B cell (primary cell): ENCODE measurements at regions of chr3 and their contacts with region 1.

Region 1: GRCh38 chr3:170307671-170308403 is 49.7 kb upstream of the SKIL start:
- DNase-seq: no peak
- ATAC-seq: no peak
- H3K4me3 ChIP-seq: no peak overlapping the region
- H3K4me3 Mint-ChIP-seq: no peak overlapping the region
- H3K27ac ChIP-seq: no peak overlapping the region
- H3K27ac Mint-ChIP-seq: no peak overlapping the region
- H3K4me1 ChIP-seq: peaks cover 6 to 10% of the 10 kb centered on the region in 2 donors
- H3K4me1 Mint-ChIP-seq: peaks cover 5% of the 10 kb centered on the region
- H3K27me3 ChIP-seq: no peaks in the 10 kb centered on the region
- H3K27me3 Mint-ChIP-seq: no peaks in the 10 kb centered on the region
- CTCF ChIP-seq: no peak

Region 2: GRCh38 chr3:170368921-170369320 is 61.1 kb after region 1 on chr3:
- CTCF ChIA-PET with region 1: interaction called, 11 read pairs
- POLR2A ChIA-PET with region 1: no interaction called
- intact Hi-C with region 1: loop called (anchors 1 kb)
- DNase-seq: no peak
- ATAC-seq: no peak
- H3K4me3 ChIP-seq: no peak overlapping the region
- H3K4me3 Mint-ChIP-seq: peak overlapping the region; percentile 44
- H3K27ac ChIP-seq: no peak overlapping the region
- H3K27ac Mint-ChIP-seq: no peak overlapping the region
- H3K4me1 ChIP-seq: peaks cover 42 to 55% of the 10 kb centered on the region in 2 donors
- H3K4me1 Mint-ChIP-seq: peaks cover 63% of the 10 kb centered on the region
- H3K27me3 ChIP-seq: no peaks in the 10 kb centered on the region
- H3K27me3 Mint-ChIP-seq: no peaks in the 10 kb centered on the region
- CTCF ChIP-seq: peak; percentile 44

Region 3: GRCh38 chr3:170397579-170398177 is 89.8 kb after region 1 on chr3:
- CTCF ChIA-PET with region 1: interaction called, 18 read pairs
- POLR2A ChIA-PET with region 1: no interaction called
- intact Hi-C with region 1: no loop called
- DNase-seq: no peak
- ATAC-seq: no peak
- H3K4me3 ChIP-seq: no peak overlapping the region
- H3K4me3 Mint-ChIP-seq: no peak overlapping the region
- H3K27ac ChIP-seq: no peak overlapping the region
- H3K27ac Mint-ChIP-seq: no peak overlapping the region
- H3K4me1 ChIP-seq: peaks cover 3 to 7% of the 10 kb centered on the region in 2 donors
- H3K4me1 Mint-ChIP-seq: peaks cover 20% of the 10 kb centered on the region
- H3K27me3 ChIP-seq: no peaks in the 10 kb centered on the region
- H3K27me3 Mint-ChIP-seq: no peaks in the 10 kb centered on the region
- CTCF ChIP-seq: no peak

Region 4: GRCh38 chr3:170414202-170414663 is 106.4 kb after region 1 on chr3:
- CTCF ChIA-PET with region 1: interaction called, 120 read pairs
- POLR2A ChIA-PET with region 1: no interaction called
- intact Hi-C with region 1: loop called (anchors 1 kb)
- DNase-seq: peak; percentile 65
- ATAC-seq: peak; percentile 58
- H3K4me3 ChIP-seq: no peak overlapping the region
- H3K4me3 Mint-ChIP-seq: no peak overlapping the region
- H3K27ac ChIP-seq: no peak overlapping the region
- H3K27ac Mint-ChIP-seq: no peak overlapping the region
- H3K4me1 ChIP-seq: peaks cover 10 to 11% of the 10 kb centered on the region in 2 donors
- H3K4me1 Mint-ChIP-seq: peaks cover 10% of the 10 kb centered on the region
- H3K27me3 ChIP-seq: peaks cover 0 to 18% (median 12%) of the 10 kb centered on the region in 4 experiments
- H3K27me3 Mint-ChIP-seq: peaks cover 22% of the 10 kb centered on the region
- CTCF ChIP-seq: peak; percentile 92

Region 5: GRCh38 chr3:170499565-170500156 is 191.8 kb after region 1 on chr3:
- CTCF ChIA-PET with region 1: interaction called, 4 read pairs
- POLR2A ChIA-PET with region 1: no interaction called
- intact Hi-C with region 1: loop called (anchors 1 kb)
- DNase-seq: no peak
- ATAC-seq: no peak
- H3K4me3 ChIP-seq: no peak overlapping the region
- H3K4me3 Mint-ChIP-seq: no peak overlapping the region
- H3K27ac ChIP-seq: no peak overlapping the region
- H3K27ac Mint-ChIP-seq: no peak overlapping the region
- H3K4me1 ChIP-seq: no peaks in the 10 kb centered on the region
- H3K4me1 Mint-ChIP-seq: no peaks in the 10 kb centered on the region
- H3K27me3 ChIP-seq: peaks cover 0 to 3% (median 0%) of the 10 kb centered on the region in 4 experiments
- H3K27me3 Mint-ChIP-seq: peaks cover 17% of the 10 kb centered on the region
- CTCF ChIP-seq: peak; percentile 23

Region 6: GRCh38 chr3:170689893-170690660 is 382.2 kb after region 1 on chr3:
- CTCF ChIA-PET with region 1: no interaction called
- POLR2A ChIA-PET with region 1: no interaction called
- intact Hi-C with region 1: loop called (anchors 1 kb)
- DNase-seq: peak; percentile 30
- ATAC-seq: no peak
- H3K4me3 ChIP-seq: no peak overlapping the region
- H3K4me3 Mint-ChIP-seq: no peak overlapping the region
- H3K27ac ChIP-seq: no peak overlapping the region
- H3K27ac Mint-ChIP-seq: no peak overlapping the region
- H3K4me1 ChIP-seq: no peaks in the 10 kb centered on the region
- H3K4me1 Mint-ChIP-seq: no peaks in the 10 kb centered on the region
- H3K27me3 ChIP-seq: no peaks in the 10 kb centered on the region
- H3K27me3 Mint-ChIP-seq: peaks cover 7% of the 10 kb centered on the region
- CTCF ChIP-seq: peak; percentile 59

Region 7: DNA sequence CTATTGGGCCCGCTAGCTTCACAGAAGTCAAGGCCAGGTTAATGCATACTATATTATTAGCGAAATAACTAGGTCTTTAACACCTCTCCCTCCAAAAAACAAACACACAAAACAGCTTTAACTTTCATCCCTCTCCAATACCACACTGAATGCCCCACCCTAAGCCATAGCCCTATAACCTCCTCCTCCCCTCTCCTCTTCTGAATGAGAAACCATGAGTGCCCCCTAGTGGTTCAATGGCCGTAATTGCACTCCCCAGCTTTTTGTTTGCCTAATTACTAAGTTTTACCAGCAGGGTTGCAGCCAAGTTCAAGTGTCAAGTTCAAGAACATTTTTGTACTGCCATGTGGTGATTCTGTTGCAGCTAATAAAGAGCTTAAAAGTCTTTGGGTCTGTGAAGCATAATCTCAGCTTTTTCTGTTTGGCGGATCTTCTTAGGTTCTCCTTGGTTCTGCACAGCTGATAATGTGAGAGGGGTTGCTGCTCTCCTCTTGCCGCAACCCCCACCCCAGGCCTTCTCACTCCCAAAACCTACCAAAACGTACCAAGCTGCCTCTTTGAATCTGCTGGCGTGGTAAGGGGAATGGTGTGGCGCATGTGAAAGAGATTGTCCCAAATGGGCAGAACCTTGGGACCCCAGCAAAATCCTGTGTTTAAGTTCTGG is 504.2 kb after region 1 on chr3:
- CTCF ChIA-PET with region 1: interaction called, 23 read pairs
- POLR2A ChIA-PET with region 1: no interaction called
- intact Hi-C with region 1: loop called (anchors 1 kb)
- DNase-seq: peak; percentile 80
- ATAC-seq: peak; percentile 81
- H3K4me3 ChIP-seq: no peak overlapping the region
- H3K4me3 Mint-ChIP-seq: no peak overlapping the region
- H3K27ac ChIP-seq: no peak overlapping the region
- H3K27ac Mint-ChIP-seq: no peak overlapping the region
- H3K4me1 ChIP-seq: no peaks in the 10 kb centered on the region
- H3K4me1 Mint-ChIP-seq: no peaks in the 10 kb centered on the region
- H3K27me3 ChIP-seq: no peaks in the 10 kb centered on the region
- H3K27me3 Mint-ChIP-seq: peaks cover 8% of the 10 kb centered on the region
- CTCF ChIP-seq: peak; percentile 87